Right cardiac atrium (tissue), 5 donors: ENCODE measurements at regions of chr18 and their contacts with region 1.

Region 1: GRCh38 chr18:63320046-63320689 is 599 bp upstream of the BCL2 start:
- DNase-seq: peak; percentile 82 to 92 (median 91)
- ATAC-seq: peak; percentile 83 to 86
- H3K4me3 ChIP-seq: peak overlapping the region; percentile 100
- H3K27ac ChIP-seq: peak overlapping the region; percentile 80
- H3K4me1 ChIP-seq: peaks cover 8% of the 10 kb centered on the region
- H3K27me3 ChIP-seq: no peaks in the 10 kb centered on the region

Region 2: DNA sequence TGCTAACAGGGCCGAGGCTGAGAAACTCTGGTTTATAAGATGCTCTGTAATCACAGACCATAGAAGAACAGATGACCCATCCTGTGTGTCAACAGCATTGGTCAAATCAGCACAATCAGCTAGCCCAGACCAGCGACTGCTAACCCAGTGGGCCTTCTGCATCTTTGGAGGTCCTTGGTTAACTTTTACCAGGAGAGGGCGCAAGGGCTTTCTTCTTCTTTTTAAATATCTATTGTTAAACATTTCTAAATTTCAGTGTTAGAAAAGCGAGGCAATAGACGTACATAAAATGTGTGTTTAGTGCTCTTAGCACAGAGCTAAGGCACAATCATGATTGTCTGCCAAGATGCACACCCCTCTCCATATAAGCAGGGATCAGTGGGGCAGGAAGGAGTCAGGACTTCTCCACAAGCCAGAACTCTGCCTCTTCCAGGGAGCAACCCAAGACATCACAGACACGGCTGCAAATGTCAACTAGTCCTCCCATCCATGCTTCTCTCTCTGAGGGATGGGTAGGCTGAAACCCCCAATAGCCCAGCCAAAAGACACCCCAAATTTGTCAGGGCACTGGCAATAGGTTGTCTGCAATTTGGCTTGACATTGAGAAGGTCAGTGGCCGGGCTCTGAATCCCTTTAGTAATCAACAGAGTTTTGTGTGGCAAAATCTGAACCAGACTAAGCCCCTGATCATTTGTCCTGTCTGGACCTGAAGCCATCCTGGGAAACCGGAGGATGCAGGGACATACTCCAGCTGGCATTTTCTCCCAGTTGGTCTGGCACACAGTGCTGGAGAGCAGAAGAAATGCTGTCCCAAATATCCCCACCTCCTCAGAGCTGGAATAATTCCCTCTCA is 188.8 kb before region 1 on chr18:
- intact Hi-C with region 1: loop called (anchors 2 to 5 kb)
- DNase-seq: peak in 1 of 3 donors; percentile 38
- ATAC-seq: peak; percentile 42 to 69
- H3K4me3 ChIP-seq: no peak overlapping the region
- H3K27ac ChIP-seq: no peak overlapping the region
- H3K4me1 ChIP-seq: no peaks in the 10 kb centered on the region
- H3K27me3 ChIP-seq: no peaks in the 10 kb centered on the region

Region 3: DNA sequence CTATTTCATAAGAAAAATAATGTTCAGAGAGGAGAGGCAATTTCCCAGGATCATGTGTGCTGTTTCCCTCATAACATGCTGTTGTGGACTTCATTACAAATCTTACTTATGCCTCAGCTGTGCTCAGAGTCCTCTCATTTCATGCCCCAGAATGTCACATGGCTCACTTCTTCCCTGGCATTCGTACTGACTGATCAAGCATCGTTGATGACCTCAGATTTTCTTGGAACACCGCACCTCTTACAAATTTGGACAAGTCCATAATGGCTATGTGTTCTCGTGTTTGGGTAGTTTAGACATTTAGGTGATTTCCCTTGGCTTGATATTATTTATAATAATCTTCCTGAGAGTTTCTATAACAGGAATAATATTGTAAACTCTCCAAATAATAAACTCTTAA is 488.0 kb after region 1 on chr18:
- intact Hi-C with region 1: no loop called
- DNase-seq: no peak
- ATAC-seq: no peak
- H3K4me3 ChIP-seq: no peak overlapping the region
- H3K27ac ChIP-seq: no peak overlapping the region
- H3K4me1 ChIP-seq: no peaks in the 10 kb centered on the region
- H3K27me3 ChIP-seq: no peaks in the 10 kb centered on the region